ENCODE measurements at regions of chr2 and their contacts with region 1.

Region 1: DNA sequence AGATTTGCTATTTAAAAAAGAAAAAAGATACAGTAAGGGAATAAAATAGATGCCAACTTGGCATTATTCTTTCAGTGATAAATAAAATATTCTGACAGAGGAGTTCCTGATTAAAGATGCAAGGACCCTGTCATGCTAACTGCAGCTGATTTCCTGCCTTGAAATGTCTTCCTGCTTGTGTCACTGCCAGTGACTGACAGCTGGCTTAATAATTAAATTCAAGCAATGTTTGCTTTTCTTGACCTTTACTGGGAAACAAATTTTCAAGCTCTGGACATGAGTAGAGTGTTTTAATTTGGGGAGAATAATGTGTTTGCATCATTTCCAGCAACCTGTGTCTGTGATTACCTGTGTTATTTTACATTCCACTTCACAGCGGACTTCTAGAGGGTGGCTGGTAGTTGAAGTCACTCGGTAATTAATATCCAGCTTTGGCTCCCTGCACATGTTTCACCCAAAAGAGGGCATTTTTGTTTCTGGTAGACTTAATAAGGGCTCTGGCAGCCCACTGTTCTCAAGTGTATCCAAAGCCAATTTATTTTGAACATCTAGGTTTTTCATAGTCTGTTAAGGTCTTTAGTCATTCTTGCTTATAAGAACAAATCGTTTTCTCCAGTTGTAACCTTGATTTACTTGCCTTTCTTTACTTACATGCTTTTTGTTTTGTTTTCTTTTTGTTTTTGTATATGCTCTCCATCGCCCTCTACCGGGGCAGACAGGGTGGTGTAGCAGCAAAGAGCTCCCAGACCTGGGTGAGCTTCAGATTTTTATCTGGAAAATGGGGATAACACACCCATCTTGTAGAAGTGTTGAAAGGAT is 48.5 kb upstream of the PROKR1 start:
- DNase-seq: peak; percentile 62
- H3K4me3 Mint-ChIP-seq: no peak overlapping the region
- H3K27ac Mint-ChIP-seq: no peak overlapping the region
- H3K4me1 Mint-ChIP-seq: peaks cover 8% of the 10 kb centered on the region
- H3K27me3 Mint-ChIP-seq: peaks cover 2% of the 10 kb centered on the region

Region 2: DNA sequence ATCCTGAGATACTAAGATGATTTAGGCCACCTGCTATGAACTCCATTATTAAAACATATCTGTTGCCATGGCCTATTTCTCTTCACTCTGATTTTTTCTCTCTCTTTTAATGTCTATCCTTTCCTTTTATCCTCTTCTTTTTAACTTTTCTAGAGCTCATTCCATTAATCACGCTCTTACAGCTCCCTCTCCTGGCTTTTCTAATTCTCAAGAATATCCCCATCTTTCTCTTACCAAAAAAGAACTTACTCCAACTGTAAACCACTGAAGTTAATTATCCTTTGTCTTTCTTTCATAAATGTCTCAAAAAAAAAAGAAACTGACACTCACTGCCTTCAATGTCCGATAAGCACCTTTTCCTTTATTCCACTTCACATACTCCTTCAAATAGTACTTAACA is 350.4 kb before region 1 on chr2:
- CTCF ChIA-PET with region 1: no interaction called
- POLR2A ChIA-PET with region 1: no interaction called
- intact Hi-C with region 1: no loop called
- DNase-seq: no peak
- H3K4me3 Mint-ChIP-seq: no peak overlapping the region
- H3K27ac Mint-ChIP-seq: no peak overlapping the region
- H3K4me1 Mint-ChIP-seq: peaks cover 24% of the 10 kb centered on the region
- H3K27me3 Mint-ChIP-seq: no peaks in the 10 kb centered on the region

Region 3: DNA sequence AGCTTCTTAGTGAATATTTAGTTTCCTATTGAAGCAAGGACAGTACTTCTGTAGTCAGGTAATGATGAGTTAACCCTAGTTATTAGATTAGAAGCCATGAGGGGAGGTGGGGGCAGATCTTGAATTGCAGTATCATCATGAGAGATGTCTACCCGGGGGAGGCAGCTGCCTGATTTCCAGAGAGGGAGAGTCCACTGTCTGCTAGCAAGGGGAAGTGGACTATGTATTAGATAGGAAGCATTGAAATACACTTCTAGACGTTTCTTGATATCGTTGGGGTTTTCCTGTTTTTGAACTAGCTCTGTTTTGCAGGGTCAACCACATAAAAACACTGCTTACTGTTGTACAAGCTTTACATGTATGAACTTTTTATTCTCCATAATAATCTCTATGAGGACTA is 88.7 kb before region 1 on chr2:
- CTCF ChIA-PET with region 1: interaction called, 10 read pairs
- POLR2A ChIA-PET with region 1: no interaction called
- intact Hi-C with region 1: no loop called
- DNase-seq: no peak
- H3K4me3 Mint-ChIP-seq: no peak overlapping the region
- H3K27ac Mint-ChIP-seq: no peak overlapping the region
- H3K4me1 Mint-ChIP-seq: peaks cover 16% of the 10 kb centered on the region
- H3K27me3 Mint-ChIP-seq: no peaks in the 10 kb centered on the region

Region 4: DNA sequence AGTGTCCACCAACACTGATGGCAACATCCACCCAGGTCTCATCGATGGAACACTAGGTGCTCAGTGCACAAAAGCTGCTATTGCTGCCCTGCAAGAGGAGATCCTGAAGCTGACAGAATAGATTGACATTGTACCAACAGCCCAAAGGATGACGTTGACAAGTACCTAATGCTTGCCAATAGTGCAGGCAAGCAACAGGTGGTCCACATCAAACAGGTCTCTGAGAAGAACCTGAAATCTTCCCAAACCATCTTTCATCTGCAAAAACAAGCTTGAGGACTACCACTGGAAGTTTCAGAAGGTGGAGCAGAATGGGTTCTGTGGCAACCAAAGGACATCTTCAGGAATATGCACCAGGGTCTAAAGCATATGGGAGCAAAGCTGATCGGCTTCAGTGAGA is 32.7 kb after region 1 on chr2:
- CTCF ChIA-PET with region 1: interaction called, 13 read pairs
- POLR2A ChIA-PET with region 1: no interaction called
- intact Hi-C with region 1: no loop called
- DNase-seq: no peak
- H3K4me3 Mint-ChIP-seq: no peak overlapping the region
- H3K27ac Mint-ChIP-seq: no peak overlapping the region
- H3K4me1 Mint-ChIP-seq: no peaks in the 10 kb centered on the region
- H3K27me3 Mint-ChIP-seq: peaks cover 8% of the 10 kb centered on the region

Region 5: GRCh38 chr2:68653538-68653982 is 58.7 kb after region 1 on chr2:
- CTCF ChIA-PET with region 1: interaction called, 11 read pairs
- POLR2A ChIA-PET with region 1: no interaction called
- intact Hi-C with region 1: loop called (anchors 2 kb)
- DNase-seq: peak; percentile 71
- H3K4me3 Mint-ChIP-seq: no peak overlapping the region
- H3K27ac Mint-ChIP-seq: peak overlapping the region; percentile 20
- H3K4me1 Mint-ChIP-seq: peaks cover 34% of the 10 kb centered on the region
- H3K27me3 Mint-ChIP-seq: peaks cover 20% of the 10 kb centered on the region

Region 6: GRCh38 chr2:68925295-68925896 is 330.5 kb after region 1 on chr2:
- CTCF ChIA-PET with region 1: interaction called, 43 read pairs
- POLR2A ChIA-PET with region 1: no interaction called
- intact Hi-C with region 1: no loop called
- DNase-seq: peak; percentile 57
- H3K4me3 Mint-ChIP-seq: no peak overlapping the region
- H3K27ac Mint-ChIP-seq: no peak overlapping the region
- H3K4me1 Mint-ChIP-seq: peaks cover 6% of the 10 kb centered on the region
- H3K27me3 Mint-ChIP-seq: no peaks in the 10 kb centered on the region